ENCODE measurements at regions of chr12 and their contacts with region 1.

Region 1: DNA sequence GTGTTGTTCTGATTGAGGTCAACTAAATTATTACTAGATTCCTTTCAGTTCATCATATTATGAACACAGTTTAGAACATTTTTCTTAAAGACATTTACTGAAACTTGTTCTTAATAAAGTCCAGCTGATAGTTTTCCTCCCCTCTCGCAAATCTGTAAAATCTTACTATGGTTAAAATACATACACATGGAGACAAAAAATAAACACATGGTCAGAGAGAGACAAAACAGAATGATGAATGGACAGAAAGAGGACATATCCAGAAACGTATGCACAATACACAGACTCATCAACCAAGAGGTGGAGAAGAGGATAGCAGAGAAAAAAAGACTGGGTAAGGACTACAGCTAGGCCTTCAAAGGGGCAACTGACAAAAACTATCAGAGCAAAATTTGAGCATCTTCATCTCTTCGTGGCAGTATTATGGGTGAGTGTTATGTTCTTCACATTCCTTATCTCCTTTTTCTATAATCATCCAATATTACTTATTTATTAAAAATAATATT is 38.4 kb downstream of the EEA1 start:
- DNase-seq: no peak
- ATAC-seq: no peak
- H3K4me3 ChIP-seq: no peak overlapping the region
- H3K4me3 Mint-ChIP-seq: peak overlapping the region in 1 of 10 donors; percentile 3
- H3K27ac ChIP-seq: no peak overlapping the region
- H3K27ac Mint-ChIP-seq: no peak overlapping the region
- H3K4me1 ChIP-seq: peaks cover 0 to 5% of the 10 kb centered on the region in 2 donors
- H3K4me1 Mint-ChIP-seq: peaks cover 0 to 65% (median 51%) of the 10 kb centered on the region in 7 donors
- H3K27me3 ChIP-seq: no peaks in the 10 kb centered on the region
- H3K27me3 Mint-ChIP-seq: no peaks in the 10 kb centered on the region

Region 2: DNA sequence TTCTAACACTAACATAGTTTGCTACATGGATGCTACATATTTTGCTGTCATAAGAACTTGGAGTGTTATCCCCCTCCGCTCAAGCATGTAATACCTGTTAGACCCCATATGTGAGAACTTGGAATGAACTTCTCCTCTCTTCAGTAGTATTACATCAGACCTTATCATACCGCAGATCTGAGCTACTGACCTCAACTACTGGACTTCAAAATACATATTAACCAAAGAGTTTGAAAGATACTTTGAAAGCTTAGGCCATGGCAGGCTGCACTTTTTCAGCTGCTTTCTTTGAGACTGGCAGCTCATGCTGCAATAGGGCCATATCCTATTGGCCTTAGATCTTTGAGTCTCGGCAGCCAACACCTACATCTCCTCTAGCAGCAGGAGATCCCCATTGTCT is 36.3 kb before region 1 on chr12:
- CTCF ChIA-PET with region 1: no interaction called
- POLR2A ChIA-PET with region 1: interaction called, 3 read pairs
- intact Hi-C with region 1: loop called in 1 of 2 experiments (anchors 5 kb)
- DNase-seq: no peak
- ATAC-seq: no peak
- H3K4me3 ChIP-seq: no peak overlapping the region
- H3K4me3 Mint-ChIP-seq: no peak overlapping the region
- H3K27ac ChIP-seq: no peak overlapping the region
- H3K27ac Mint-ChIP-seq: peak overlapping the region in 3 of 9 donors; percentile 0 to 10 (median 10)
- H3K4me1 ChIP-seq: no peaks in the 10 kb centered on the region
- H3K4me1 Mint-ChIP-seq: peaks cover 0 to 16% (median 5%) of the 10 kb centered on the region in 7 donors
- H3K27me3 ChIP-seq: no peaks in the 10 kb centered on the region
- H3K27me3 Mint-ChIP-seq: no peaks in the 10 kb centered on the region

Region 3: GRCh38 chr12:92905811-92906554 is 15.3 kb after region 1 on chr12:
- CTCF ChIA-PET with region 1: interaction called, 3 read pairs
- POLR2A ChIA-PET with region 1: interaction called, 3 read pairs
- intact Hi-C with region 1: loop called in 1 of 2 experiments (anchors 2 kb)
- DNase-seq: no peak
- ATAC-seq: no peak
- H3K4me3 ChIP-seq: no peak overlapping the region
- H3K4me3 Mint-ChIP-seq: peak overlapping the region in 9 of 10 donors; percentile 76 to 92 (median 83)
- H3K27ac ChIP-seq: peak overlapping the region; percentile 53
- H3K27ac Mint-ChIP-seq: peak overlapping the region in 8 of 9 donors; percentile 69 to 92 (median 86)
- H3K4me1 ChIP-seq: peaks cover 6 to 15% of the 10 kb centered on the region in 2 donors
- H3K4me1 Mint-ChIP-seq: peaks cover 20 to 82% (median 44%) of the 10 kb centered on the region in 7 donors
- H3K27me3 ChIP-seq: no peaks in the 10 kb centered on the region
- H3K27me3 Mint-ChIP-seq: no peaks in the 10 kb centered on the region

Region 4: DNA sequence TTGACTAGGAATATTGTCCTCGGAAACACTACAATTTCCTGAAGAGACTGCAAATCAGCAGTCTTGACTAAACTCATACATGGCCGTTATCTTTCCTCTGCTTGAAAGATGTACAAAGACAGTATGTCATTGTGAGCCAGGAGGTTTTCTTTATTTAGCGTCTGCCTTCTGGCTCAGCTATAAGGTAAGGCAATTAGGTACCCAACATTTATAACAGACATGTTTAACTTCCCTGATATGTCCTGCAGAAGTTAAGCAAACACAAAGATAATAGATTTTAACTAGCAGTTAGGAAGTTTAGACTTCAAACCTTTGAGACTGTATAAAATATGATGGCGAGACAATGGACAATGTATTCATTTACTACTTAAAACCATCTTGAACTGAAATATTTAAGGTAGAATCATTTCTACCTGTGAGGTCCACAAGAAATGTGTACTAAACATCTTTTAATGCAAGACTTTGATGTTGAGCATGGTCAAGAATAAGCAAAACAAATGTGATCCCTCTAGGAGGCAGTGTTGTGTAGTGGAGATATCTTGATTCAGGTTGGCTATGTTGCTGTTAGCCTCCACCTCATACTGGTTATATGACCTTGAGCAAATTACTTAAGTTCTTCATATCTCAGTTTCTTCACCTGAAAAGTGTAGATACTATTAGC is 134.6 kb after region 1 on chr12:
- CTCF ChIA-PET with region 1: no interaction called
- POLR2A ChIA-PET with region 1: no interaction called
- intact Hi-C with region 1: loop called in 1 of 2 experiments (anchors 1 kb)
- DNase-seq: peak in 3 of 9 donors; percentile 2 to 15 (median 4)
- ATAC-seq: peak; percentile 56
- H3K4me3 ChIP-seq: no peak overlapping the region
- H3K4me3 Mint-ChIP-seq: no peak overlapping the region
- H3K27ac ChIP-seq: no peak overlapping the region
- H3K27ac Mint-ChIP-seq: no peak overlapping the region
- H3K4me1 ChIP-seq: no peaks in the 10 kb centered on the region
- H3K4me1 Mint-ChIP-seq: no peaks in the 10 kb centered on the region
- H3K27me3 ChIP-seq: no peaks in the 10 kb centered on the region
- H3K27me3 Mint-ChIP-seq: peaks cover 0 to 3% (median 0%) of the 10 kb centered on the region in 5 donors

Measured in naive thymus-derived CD4-positive, alpha-beta T cell (primary cell).